Tibial artery (tissue), 4 donors: ENCODE measurements at regions of chr17 and their contacts with region 1.

Region 1: DNA sequence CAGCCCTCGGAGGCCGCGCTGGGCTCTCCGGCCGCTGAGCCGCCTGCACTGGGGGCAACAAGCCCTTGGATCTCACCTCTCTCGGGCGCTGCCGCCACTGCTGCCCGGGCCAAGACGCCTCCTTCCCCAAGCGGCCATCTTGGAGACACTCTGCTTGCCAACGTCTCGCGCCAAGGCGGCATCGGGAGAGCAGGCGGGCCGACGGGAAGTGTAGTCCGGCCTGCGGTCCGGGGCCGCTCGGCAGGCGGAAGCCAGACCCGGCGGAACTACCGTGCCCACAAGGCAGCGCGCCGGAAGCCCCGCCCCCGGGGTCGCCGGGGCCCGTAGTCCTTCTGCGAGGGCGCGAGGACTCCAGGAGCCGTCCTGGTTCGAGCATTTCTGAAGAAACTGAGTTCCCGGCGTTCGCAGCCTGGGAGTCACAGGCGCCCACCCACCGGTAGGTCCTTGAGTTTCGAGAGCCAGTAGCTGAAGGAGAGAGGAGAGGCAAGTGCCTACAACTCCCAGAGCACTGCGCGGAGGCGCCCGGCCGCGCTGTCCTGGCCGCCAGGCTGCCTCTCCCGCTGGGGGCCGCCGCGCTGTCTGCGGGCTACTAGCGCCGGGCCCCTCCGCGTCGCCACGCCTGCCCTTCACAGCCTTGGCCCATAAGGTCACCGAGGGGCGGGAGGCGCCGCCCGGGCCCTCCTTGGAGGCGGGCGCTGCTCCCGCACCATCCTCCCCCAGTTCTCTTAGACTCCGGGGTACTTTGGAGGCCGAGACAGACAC is at the start of gene TMEM11:
- DNase-seq: peak; percentile 96 to 97
- H3K4me3 ChIP-seq: peak within 1 kb of the TSS; percentile 91
- H3K27ac ChIP-seq: peak within 1 kb of the TSS; percentile 91 to 96
- H3K4me1 ChIP-seq: peaks cover 0 to 54% (median 44%) of the 10 kb centered on the region in 4 donors
- H3K27me3 ChIP-seq: no peaks in the 10 kb centered on the region
- CTCF ChIP-seq: peak; percentile 13 to 40

Region 2: DNA sequence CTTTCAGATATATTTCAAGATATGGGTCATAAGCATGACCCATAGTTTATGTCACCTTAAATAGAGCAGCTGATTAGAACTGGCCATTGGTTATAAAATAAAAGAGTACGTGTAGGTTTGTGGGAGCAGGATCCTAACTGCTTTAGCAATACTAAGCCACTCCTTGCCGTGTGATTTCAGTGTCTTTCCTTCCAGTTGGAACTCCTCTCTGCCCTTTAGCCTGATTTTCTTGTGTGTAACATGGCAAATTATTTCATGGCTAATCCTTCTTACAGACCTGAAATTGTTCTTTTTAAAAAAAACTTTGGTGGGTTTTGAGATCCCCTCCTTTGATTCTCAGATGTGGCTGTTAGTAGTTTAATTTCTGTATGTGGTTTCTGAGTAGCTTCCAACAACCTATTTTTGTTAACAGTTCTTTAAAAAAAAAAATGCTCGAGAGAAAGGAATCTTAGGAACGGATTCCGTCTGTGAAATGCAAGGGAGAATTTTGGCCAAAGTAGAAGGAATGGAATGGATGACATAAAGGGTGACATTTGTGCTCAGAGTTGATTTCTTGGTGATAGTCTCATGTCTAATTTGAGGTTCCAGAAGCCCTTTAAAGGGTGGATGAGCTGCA is 47.5 kb before region 1 on chr17:
- intact Hi-C with region 1: loop called (anchors 5 kb)
- DNase-seq: no peak
- H3K4me3 ChIP-seq: no peak overlapping the region
- H3K27ac ChIP-seq: peak overlapping the region; percentile 88 to 89
- H3K4me1 ChIP-seq: peaks cover 0 to 94% (median 70%) of the 10 kb centered on the region in 4 donors
- H3K27me3 ChIP-seq: no peaks in the 10 kb centered on the region
- CTCF ChIP-seq: no peak

Region 3: GRCh38 chr17:21252796-21253645 is 38.8 kb after region 1 on chr17 and contains the start of gene NATD1:
- intact Hi-C with region 1: loop called (anchors 5 kb)
- DNase-seq: peak; percentile 92 to 93
- H3K4me3 ChIP-seq: peak within 1 kb of the TSS; percentile 78 to 80
- H3K27ac ChIP-seq: peak within 1 kb of the TSS; percentile 75 to 76
- H3K4me1 ChIP-seq: peaks cover 0 to 54% (median 37%) of the 10 kb centered on the region in 4 donors
- H3K27me3 ChIP-seq: no peaks in the 10 kb centered on the region
- CTCF ChIP-seq: peak in 1 of 2 experiments; percentile 4

Region 4: DNA sequence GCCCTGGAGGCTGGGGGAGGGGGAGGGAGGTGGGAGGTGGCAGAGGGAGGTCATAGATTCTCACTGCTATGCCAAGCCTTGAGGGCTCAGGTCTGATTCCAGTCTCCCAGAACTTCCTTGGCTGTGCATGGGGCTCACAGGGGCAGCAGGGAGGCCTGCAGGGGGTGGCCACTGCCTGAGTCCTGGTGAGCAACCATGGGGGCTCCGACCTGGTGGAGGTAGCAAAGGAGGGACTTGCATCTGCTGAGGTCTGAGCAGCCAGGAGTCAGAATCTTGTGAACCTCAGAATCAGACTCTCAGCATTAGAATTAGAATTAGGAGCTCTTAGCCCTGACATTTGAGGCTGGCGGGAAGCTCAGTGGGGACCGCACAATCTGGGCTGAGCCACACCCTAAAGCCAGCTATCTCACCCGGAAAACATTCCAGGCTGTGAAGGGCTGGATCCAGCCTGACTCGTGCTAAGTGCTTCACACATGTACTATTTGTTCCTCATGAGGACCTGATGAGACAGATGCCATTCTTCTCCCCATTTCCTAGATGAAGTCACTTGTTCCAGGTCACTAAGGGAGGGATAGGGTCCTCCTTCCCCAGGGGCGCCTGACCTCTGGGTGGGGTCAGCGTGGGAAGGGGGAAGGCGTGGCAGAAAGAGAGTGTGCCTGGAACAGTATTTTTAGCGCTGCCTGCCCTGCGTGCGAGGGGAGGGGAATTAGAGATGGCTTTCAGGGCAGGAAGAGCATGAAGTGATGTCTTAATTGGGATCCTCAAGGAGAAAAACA is 144.7 kb after region 1 on chr17:
- intact Hi-C with region 1: no loop called
- DNase-seq: no peak
- H3K4me3 ChIP-seq: no peak overlapping the region
- H3K27ac ChIP-seq: no peak overlapping the region
- H3K4me1 ChIP-seq: no peaks in the 10 kb centered on the region
- H3K27me3 ChIP-seq: no peaks in the 10 kb centered on the region
- CTCF ChIP-seq: no peak

Region 5: DNA sequence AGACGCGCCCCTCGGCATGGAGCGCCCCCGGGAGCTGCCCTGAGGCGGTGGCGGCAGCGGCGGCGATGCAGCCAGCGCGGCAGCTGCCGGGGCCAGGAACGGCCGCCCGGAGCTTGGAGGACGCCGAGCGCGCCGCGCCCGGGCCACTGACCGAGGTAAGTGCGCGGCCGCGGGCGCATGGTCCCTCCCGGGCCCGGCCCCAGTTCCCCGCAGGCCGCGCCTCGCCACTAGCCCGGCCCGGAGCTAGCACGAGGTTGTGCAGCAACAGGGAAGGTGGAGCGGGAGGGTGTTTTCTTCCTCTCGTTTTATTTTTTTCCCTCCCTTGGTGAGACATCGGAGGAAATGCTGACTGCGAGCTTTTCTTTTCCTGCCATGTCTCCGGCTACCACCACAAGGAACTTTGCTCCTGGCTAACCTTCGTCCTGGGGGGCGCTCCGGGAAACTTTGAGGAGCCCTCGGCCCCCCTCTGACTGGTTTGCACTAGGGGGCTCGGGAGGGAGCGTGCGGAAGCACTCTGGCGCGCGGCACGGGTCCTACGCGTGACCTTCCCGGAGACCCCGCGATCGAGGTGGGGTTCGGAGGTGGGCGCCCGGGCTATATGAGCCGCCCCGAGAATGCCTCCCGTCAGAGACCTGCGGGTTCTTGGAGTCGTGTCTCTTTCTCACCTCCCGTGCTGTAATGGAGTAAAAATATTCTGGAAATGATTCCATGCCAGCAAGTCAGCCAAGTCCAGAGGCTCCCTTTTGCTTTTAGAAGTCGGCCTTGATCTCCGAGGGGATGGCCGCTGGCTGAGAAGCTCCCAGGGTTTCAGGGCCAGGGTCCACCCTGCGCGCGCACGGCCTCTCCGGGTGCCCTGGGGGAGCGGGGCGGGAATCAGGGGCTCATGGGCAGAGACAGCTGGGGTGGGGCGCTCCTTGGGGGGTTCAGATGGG is 162.8 kb after region 1 on chr17:
- intact Hi-C with region 1: no loop called
- DNase-seq: no peak
- H3K4me3 ChIP-seq: peak overlapping the region; percentile 42 to 60
- H3K27ac ChIP-seq: peak overlapping the region in 1 of 2 donors; percentile 3
- H3K4me1 ChIP-seq: peaks cover 0 to 31% (median 27%) of the 10 kb centered on the region in 4 donors
- H3K27me3 ChIP-seq: peaks cover 0 to 62% of the 10 kb centered on the region in 2 donors
- CTCF ChIP-seq: no peak